IMR-90 (cell line): ENCODE measurements at regions of chr11 and their contacts with region 1.

Region 1: GRCh38 chr11:118565051-118565450 is 680 bp downstream of the IFT46 start:
- DNase-seq: no peak
- ATAC-seq: no peak
- H3K4me3 ChIP-seq: no peak overlapping the region
- H3K27ac ChIP-seq: no peak overlapping the region
- H3K4me1 ChIP-seq: peaks cover 2% of the 10 kb centered on the region; the same call in 1 of the 2 replicates
- H3K27me3 ChIP-seq: no peaks in the 10 kb centered on the region
- CTCF ChIP-seq: no peak
- POLR2A ChIP-seq: no peak
- RAD21 ChIP-seq: no peak

Region 2: DNA sequence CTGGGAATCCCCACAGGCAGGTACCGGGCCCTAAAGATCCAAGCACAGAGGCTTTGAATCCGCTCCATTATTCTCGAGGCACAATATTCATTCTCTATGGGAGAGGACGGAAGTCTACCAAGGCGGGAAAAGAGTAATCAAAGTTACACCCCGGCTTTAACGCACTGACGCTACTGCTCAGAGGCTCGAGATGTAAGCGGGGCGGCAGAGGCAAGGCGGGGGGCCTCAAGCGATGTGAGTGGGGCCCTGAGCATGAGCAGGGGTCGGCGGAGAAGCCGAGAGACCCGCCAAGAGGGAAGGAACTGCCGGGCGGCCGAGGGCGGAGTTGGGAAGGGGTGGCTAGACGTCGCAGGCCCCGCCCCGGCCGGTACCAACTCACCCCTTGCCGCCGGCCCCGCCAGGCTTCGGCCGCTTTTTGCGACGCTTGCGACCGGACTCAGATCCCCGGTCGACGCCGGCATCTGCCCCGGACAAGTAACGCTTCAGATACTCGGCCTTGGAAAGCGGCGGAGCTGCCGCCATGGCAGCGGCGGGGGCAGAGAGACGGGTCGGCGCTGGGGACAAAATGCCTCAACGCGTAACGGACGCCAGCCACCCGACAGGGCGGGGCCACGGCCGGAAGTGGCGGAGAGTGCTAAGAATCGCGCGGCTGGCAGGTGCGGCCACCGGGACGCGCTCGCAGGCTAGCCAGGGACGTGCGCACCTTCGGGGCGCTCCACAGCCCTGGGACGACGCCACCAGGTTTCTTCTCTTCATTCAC is 1792.4 kb before region 1 on chr11 and contains the start of gene BUD13:
- CTCF ChIA-PET with region 1: no interaction called
- POLR2A ChIA-PET with region 1: no interaction called
- dilution Hi-C with region 1: no loop called
- in situ Hi-C with region 1: no loop called
- intact Hi-C with region 1: loop called (anchors 5 kb)
- DNase-seq: peak; percentile 75
- ATAC-seq: peak; percentile 93
- H3K4me3 ChIP-seq: peak within 1 kb of the TSS; percentile 96
- H3K27ac ChIP-seq: peak within 1 kb of the TSS; percentile 98
- H3K4me1 ChIP-seq: peaks cover 5% of the 10 kb centered on the region
- H3K27me3 ChIP-seq: no peaks in the 10 kb centered on the region
- CTCF ChIP-seq: no peak
- POLR2A ChIP-seq: peak; percentile 64
- RAD21 ChIP-seq: no peak
- total RNA-seq, gene BUD13: 14.0 and 16.4 TPM in 2 replicates

Region 3: GRCh38 chr11:118634431-118635236 is 69.6 kb after region 1 on chr11:
- CTCF ChIA-PET with region 1: no interaction called
- POLR2A ChIA-PET with region 1: no interaction called
- dilution Hi-C with region 1: no loop called
- in situ Hi-C with region 1: no loop called
- intact Hi-C with region 1: no loop called
- DNase-seq: peak; percentile 55
- ATAC-seq: peak; percentile 67
- H3K4me3 ChIP-seq: no peak overlapping the region
- H3K27ac ChIP-seq: peak overlapping the region; percentile 60; the same call in 1 of the 2 replicates
- H3K4me1 ChIP-seq: peaks cover 20% of the 10 kb centered on the region
- H3K27me3 ChIP-seq: no peaks in the 10 kb centered on the region
- CTCF ChIP-seq: no peak
- POLR2A ChIP-seq: no peak
- RAD21 ChIP-seq: no peak